ENCODE measurements at regions of chr5 and their contacts with region 1.

Region 1: GRCh38 chr5:55691265-55692105 is 20.6 kb downstream of the SLC38A9 start:
- DNase-seq: no peak
- H3K4me3 ChIP-seq: peak overlapping the region; percentile 17 to 56
- H3K27ac ChIP-seq: peak overlapping the region; percentile 40 to 46
- H3K4me1 ChIP-seq: peaks cover 6 to 8% of the 10 kb centered on the region in 2 donors
- H3K27me3 ChIP-seq: no peaks in the 10 kb centered on the region
- CTCF ChIP-seq: peak; percentile 59 to 69 (median 68)

Region 2: GRCh38 chr5:55172051-55172899 is 519.2 kb before region 1 on chr5:
- intact Hi-C with region 1: loop called (anchors 5 kb)
- DNase-seq: peak in 1 of 2 donors; percentile 78
- H3K4me3 ChIP-seq: peak overlapping the region; percentile 57 to 64
- H3K27ac ChIP-seq: no peak overlapping the region
- H3K4me1 ChIP-seq: peaks cover 0 to 8% of the 10 kb centered on the region in 2 donors
- H3K27me3 ChIP-seq: peaks cover 6% of the 10 kb centered on the region
- CTCF ChIP-seq: peak; percentile 47 to 80 (median 65)

Region 3: GRCh38 chr5:55344392-55344992 is 347.0 kb before region 1 on chr5:
- intact Hi-C with region 1: loop called (anchors 5 kb)
- DNase-seq: peak in 1 of 2 donors; percentile 82
- H3K4me3 ChIP-seq: peak overlapping the region in 1 of 2 donors; percentile 36
- H3K27ac ChIP-seq: peak overlapping the region; percentile 55 to 71
- H3K4me1 ChIP-seq: peaks cover 0 to 7% of the 10 kb centered on the region in 2 donors
- H3K27me3 ChIP-seq: no peaks in the 10 kb centered on the region
- CTCF ChIP-seq: peak; percentile 66 to 85 (median 80)

Region 4: GRCh38 chr5:55427157-55427556 is 264.3 kb before region 1 on chr5:
- intact Hi-C with region 1: loop called (anchors 5 kb)
- DNase-seq: peak in 1 of 2 donors; percentile 75
- H3K4me3 ChIP-seq: no peak overlapping the region
- H3K27ac ChIP-seq: peak overlapping the region; percentile 17 to 63
- H3K4me1 ChIP-seq: peaks cover 0 to 16% of the 10 kb centered on the region in 2 donors
- H3K27me3 ChIP-seq: no peaks in the 10 kb centered on the region
- CTCF ChIP-seq: no peak

Region 5: GRCh38 chr5:55621229-55621628 is 70.3 kb before region 1 on chr5:
- intact Hi-C with region 1: no loop called
- DNase-seq: no peak
- H3K4me3 ChIP-seq: no peak overlapping the region
- H3K27ac ChIP-seq: no peak overlapping the region
- H3K4me1 ChIP-seq: no peaks in the 10 kb centered on the region
- H3K27me3 ChIP-seq: no peaks in the 10 kb centered on the region
- CTCF ChIP-seq: no peak

Region 6: DNA sequence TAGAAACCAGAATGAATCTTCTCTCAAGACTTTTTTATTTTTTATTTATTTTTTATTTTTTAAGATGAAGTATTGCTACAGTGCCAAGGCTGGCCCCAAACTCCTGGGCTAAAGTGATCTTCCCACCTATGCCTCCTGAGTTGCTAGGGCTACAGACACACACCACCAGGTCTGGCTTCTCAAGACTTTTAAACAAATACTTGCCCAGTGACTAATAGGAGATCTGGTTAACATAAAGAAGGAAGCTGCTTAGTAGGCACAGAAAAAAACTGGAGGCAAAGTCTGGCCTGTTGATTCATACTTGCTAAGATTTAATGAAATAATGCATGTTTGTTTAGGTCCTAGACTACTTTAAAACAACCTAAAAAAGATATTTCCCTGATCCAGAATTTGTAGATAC is 23.1 kb before region 1 on chr5:
- intact Hi-C with region 1: loop called (anchors 1 kb)
- DNase-seq: no peak
- H3K4me3 ChIP-seq: no peak overlapping the region
- H3K27ac ChIP-seq: peak overlapping the region; percentile 15 to 58
- H3K4me1 ChIP-seq: peaks cover 0 to 10% of the 10 kb centered on the region in 2 donors
- H3K27me3 ChIP-seq: no peaks in the 10 kb centered on the region
- CTCF ChIP-seq: no peak

Measured in ascending aorta (tissue), 2 donors.